HepG2 (cell line): ENCODE measurements at regions of chr9 and their contacts with region 1.

Region 1: GRCh38 chr9:893843-894420 is 52.4 kb downstream of the DMRT1 start:
- DNase-seq: peak; percentile 56
- ATAC-seq: peak; percentile 95
- H3K4me3 ChIP-seq: no peak overlapping the region
- H3K27ac ChIP-seq: no peak overlapping the region
- H3K4me1 ChIP-seq: no peaks in the 10 kb centered on the region
- H3K27me3 ChIP-seq: peaks cover 0 to 6% of the 10 kb centered on the region in 2 experiments; a peak in 2 of 5 replicates
- CTCF ChIP-seq: peak; percentile 82
- EP300 ChIP-seq: no peak
- POLR2A ChIP-seq: no peak
- RAD21 ChIP-seq: peak; percentile 47; the same call in 1 of the 2 replicates

Region 2: GRCh38 chr9:738209-738915 is 155.6 kb before region 1 on chr9:
- CTCF ChIA-PET with region 1: no interaction called
- POLR2A ChIA-PET with region 1: no interaction called
- in situ Hi-C with region 1: no loop called
- intact Hi-C with region 1: no loop called
- DNase-seq: no peak
- ATAC-seq: no peak
- H3K4me3 ChIP-seq: no peak overlapping the region
- H3K27ac ChIP-seq: no peak overlapping the region
- H3K4me1 ChIP-seq: peaks cover 36% of the 10 kb centered on the region
- H3K27me3 ChIP-seq: no peaks in the 10 kb centered on the region
- CTCF ChIP-seq: no peak
- EP300 ChIP-seq: no peak
- POLR2A ChIP-seq: no peak
- RAD21 ChIP-seq: no peak

Region 3: GRCh38 chr9:852539-852938 is 41.4 kb before region 1 on chr9:
- CTCF ChIA-PET with region 1: no interaction called
- POLR2A ChIA-PET with region 1: no interaction called
- in situ Hi-C with region 1: no loop called
- intact Hi-C with region 1: no loop called
- DNase-seq: no peak
- ATAC-seq: no peak
- H3K4me3 ChIP-seq: no peak overlapping the region
- H3K27ac ChIP-seq: no peak overlapping the region
- H3K4me1 ChIP-seq: no peaks in the 10 kb centered on the region
- H3K27me3 ChIP-seq: peaks cover 0 to 19% of the 10 kb centered on the region in 2 experiments; a peak in 2 of 5 replicates
- CTCF ChIP-seq: no peak
- EP300 ChIP-seq: no peak
- POLR2A ChIP-seq: no peak
- RAD21 ChIP-seq: no peak

Region 4: DNA sequence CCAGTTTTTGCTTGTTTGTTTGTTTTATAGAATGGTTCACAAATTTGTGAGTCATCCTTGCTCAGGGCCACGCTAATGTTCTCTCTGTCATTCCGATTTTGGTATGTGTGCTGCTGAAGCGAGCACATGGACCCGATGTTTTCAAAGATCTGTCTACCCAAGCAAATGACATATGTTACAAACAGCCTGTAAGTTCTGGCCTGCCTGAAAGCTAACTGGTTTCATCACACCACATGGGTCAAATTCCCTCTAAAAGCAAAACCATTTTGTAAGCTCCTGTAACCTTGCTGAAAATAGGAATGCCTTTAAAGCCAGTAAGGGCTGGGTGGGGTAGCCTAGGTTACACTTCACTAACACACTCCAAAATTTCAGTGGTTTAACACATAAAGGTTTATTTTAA is 107.9 kb after region 1 on chr9:
- CTCF ChIA-PET with region 1: interaction called, 10 read pairs
- POLR2A ChIA-PET with region 1: no interaction called
- in situ Hi-C with region 1: loop called (anchors 5 kb)
- intact Hi-C with region 1: loop called (anchors 1 kb)
- DNase-seq: no peak
- ATAC-seq: no peak
- H3K4me3 ChIP-seq: no peak overlapping the region
- H3K27ac ChIP-seq: no peak overlapping the region
- H3K4me1 ChIP-seq: no peaks in the 10 kb centered on the region
- H3K27me3 ChIP-seq: no peaks in the 10 kb centered on the region
- CTCF ChIP-seq: no peak
- EP300 ChIP-seq: no peak
- POLR2A ChIP-seq: no peak
- RAD21 ChIP-seq: no peak